K562 (cell line): ENCODE measurements at regions of chr13 and their contacts with region 1.

Region 1: GRCh38 chr13:20489185-20489820 is 36.4 kb downstream of the CRYL1 start:
- DNase-seq: no peak
- ATAC-seq: peak; percentile 51; the same call in 2 of the 3 replicates
- H3K4me3 ChIP-seq: no peak overlapping the region
- H3K27ac ChIP-seq: no peak overlapping the region
- H3K4me1 ChIP-seq: no peaks in the 10 kb centered on the region
- H3K27me3 ChIP-seq: no peaks in the 10 kb centered on the region
- CTCF ChIP-seq: peak in 1 of 3 experiments; percentile 31; a peak in 1 of 6 replicates
- EP300 ChIP-seq: no peak
- POLR2A ChIP-seq: no peak
- RAD21 ChIP-seq: peak; percentile 30 to 43

Region 2: GRCh38 chr13:20182231-20182846 is 307.0 kb before region 1 on chr13:
- CTCF ChIA-PET with region 1: no interaction called
- POLR2A ChIA-PET with region 1: no interaction called
- in situ Hi-C with region 1: no loop called
- intact Hi-C with region 1: loop called (anchors 5 kb)
- DNase-seq: peak; percentile 51 to 64 (median 58)
- ATAC-seq: peak; percentile 88
- H3K4me3 ChIP-seq: no peak overlapping the region
- H3K27ac ChIP-seq: no peak overlapping the region
- H3K4me1 ChIP-seq: no peaks in the 10 kb centered on the region
- H3K27me3 ChIP-seq: peaks cover 15 to 24% of the 10 kb centered on the region in 2 experiments; a peak in 4 of 5 replicates
- CTCF ChIP-seq: peak; percentile 58 to 74 (median 64)
- EP300 ChIP-seq: no peak
- POLR2A ChIP-seq: no peak
- RAD21 ChIP-seq: peak; percentile 39 to 65

Region 3: GRCh38 chr13:20534038-20534608 is 44.8 kb after region 1 on chr13:
- CTCF ChIA-PET with region 1: no interaction called
- POLR2A ChIA-PET with region 1: no interaction called
- in situ Hi-C with region 1: no loop called
- intact Hi-C with region 1: no loop called
- DNase-seq: no peak
- ATAC-seq: no peak
- H3K4me3 ChIP-seq: no peak overlapping the region
- H3K27ac ChIP-seq: no peak overlapping the region
- H3K4me1 ChIP-seq: no peaks in the 10 kb centered on the region
- H3K27me3 ChIP-seq: no peaks in the 10 kb centered on the region
- CTCF ChIP-seq: no peak
- EP300 ChIP-seq: no peak
- POLR2A ChIP-seq: no peak
- RAD21 ChIP-seq: no peak